ENCODE measurements at regions of chr6 and their contacts with region 1.

Region 1: DNA sequence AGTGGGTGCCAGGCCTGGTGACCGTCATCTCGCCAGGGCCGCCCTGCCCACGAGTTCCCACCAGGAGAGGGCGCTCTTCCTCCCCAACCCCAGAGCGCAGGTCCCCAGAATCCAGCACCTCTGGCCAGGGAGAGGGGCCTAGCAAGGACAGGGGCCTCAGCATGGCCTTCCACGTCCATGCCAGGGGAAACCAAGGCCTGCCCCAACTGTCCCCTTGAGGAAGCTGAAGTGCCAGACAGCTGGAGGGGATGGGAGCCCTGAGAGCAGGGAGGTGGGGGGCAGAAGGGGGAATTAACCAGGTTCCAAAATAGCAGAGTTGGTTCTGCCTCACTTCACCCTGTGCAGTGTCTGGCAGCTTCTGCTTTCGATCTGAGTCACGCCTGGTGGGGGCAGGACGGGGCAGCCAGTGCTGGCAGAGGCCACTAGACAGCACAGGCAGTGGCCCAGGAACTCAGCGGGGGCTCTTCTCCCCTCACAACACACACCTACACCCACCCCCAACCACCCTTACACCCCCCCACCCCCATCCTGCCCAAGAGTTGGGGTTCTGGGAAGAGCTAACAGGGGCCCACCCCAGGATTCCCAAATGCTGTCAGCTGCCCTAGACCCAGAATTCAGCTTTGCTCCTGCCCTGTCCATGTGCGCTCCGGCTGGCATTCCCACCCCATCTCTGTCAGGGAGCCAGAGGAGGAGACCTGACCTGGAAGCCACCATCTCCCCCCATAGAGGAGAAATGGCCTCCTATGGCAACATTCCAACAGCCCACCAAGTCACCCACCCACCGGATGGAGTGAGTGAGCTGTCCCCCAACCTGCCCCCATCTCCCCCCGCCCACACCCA is 29.2 kb downstream of the TFEB start:
- DNase-seq: peak; percentile 91
- ATAC-seq: peak; percentile 88

Region 2: GRCh38 chr6:41689171-41690008 is 16.8 kb before region 1 on chr6:
- intact Hi-C with region 1: no loop called
- DNase-seq: no peak
- ATAC-seq: no peak

Region 3: DNA sequence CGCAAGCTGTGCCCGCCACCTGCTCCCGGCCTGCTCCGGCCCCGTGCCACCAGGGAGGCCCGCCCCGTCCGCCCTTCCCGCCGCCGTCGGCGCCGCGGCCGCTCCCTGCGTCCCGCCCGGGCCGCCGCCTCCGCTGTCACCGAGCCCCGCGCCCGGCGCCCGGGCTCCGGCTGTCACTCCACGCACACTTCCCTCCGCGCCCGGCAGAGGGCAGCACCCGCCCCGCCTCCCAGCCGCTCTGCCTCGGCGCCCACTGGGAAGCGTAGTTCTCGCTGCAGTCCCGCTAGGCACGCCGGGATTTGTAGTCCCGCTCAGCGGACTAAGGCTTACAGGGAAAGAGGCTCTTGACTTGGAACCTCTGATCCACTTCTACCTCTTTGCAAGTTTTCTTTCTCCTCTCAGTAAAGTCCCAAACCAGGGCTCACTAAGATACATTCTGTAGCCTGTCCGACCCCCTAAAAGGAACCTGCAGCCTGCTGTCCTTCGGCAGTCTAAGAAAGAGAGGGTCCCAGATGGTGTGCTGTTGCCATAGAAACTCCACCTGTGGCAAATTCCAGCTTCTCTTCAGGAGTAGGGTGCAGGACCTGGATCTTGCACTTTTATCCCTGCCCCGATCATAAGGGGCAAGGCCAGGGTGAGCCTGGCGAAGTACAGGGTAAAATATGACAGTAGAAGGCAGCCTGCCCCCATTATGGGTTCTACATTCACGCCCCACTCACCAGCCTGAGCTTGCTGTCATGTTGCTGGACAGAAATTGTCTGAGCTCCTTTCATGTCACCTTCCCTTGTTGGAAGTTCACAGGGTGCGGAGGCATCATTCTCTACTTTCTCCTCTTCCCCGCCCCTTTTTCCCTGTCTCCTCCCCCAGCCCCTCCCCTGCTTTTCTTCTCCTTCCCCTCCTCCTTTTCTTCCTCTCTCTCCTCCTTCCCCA is 29.5 kb after region 1 on chr6 and contains the start of gene TFEB:
- intact Hi-C with region 1: loop called (anchors 1 kb)
- DNase-seq: peak; percentile 98
- ATAC-seq: peak; percentile 70
- total RNA-seq, gene TFEB: 39.5 TPM